Naive thymus-derived CD4-positive, alpha-beta T cell (primary cell): ENCODE measurements at regions of chr2 and their contacts with region 1.

Region 1: GRCh38 chr2:26330113-26330549 is 15.8 kb upstream of the SELENOI start:
- DNase-seq: peak; percentile 62 to 81 (median 76)
- ATAC-seq: peak; percentile 99
- H3K4me3 ChIP-seq: no peak overlapping the region
- H3K4me3 Mint-ChIP-seq: peak overlapping the region in 4 of 10 donors; percentile 6 to 41 (median 19)
- H3K27ac ChIP-seq: no peak overlapping the region
- H3K27ac Mint-ChIP-seq: peak overlapping the region in 3 of 9 donors; percentile 19 to 58 (median 25)
- H3K4me1 ChIP-seq: peaks cover 0 to 6% of the 10 kb centered on the region in 2 donors
- H3K4me1 Mint-ChIP-seq: peaks cover 3 to 19% (median 9%) of the 10 kb centered on the region in 7 donors
- H3K27me3 ChIP-seq: no peaks in the 10 kb centered on the region
- H3K27me3 Mint-ChIP-seq: peaks cover 0 to 4% (median 0%) of the 10 kb centered on the region in 5 donors

Region 2: DNA sequence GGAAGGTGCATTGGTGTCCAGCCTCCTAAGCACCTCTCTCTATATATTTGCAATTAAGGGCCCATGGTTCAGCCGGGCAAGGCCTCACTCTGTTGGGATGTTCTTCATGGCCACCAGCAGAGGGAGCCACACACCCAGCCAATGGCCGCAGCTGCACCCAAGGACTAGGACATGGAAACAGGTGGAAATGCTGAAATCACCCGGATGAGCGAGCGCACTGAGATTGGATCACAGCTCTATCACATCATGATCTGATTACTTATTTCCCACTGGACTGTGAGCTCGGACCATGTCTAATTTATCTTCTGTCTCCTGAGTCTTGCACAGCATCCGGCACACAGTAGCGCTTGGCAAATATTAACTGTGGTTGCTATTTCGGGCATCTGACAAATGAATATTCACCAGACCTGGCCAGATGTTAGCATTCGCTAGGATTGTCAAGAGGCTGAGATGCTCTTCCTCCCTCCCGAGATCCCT is 379.0 kb before region 1 on chr2:
- CTCF ChIA-PET with region 1: no interaction called
- POLR2A ChIA-PET with region 1: no interaction called
- intact Hi-C with region 1: loop called (anchors 1 kb)
- DNase-seq: peak; percentile 39 to 76 (median 57)
- ATAC-seq: peak; percentile 95
- H3K4me3 ChIP-seq: no peak overlapping the region
- H3K4me3 Mint-ChIP-seq: no peak overlapping the region
- H3K27ac ChIP-seq: no peak overlapping the region
- H3K27ac Mint-ChIP-seq: peak overlapping the region in 1 of 9 donors; percentile 18
- H3K4me1 ChIP-seq: no peaks in the 10 kb centered on the region
- H3K4me1 Mint-ChIP-seq: peaks cover 0 to 4% (median 0%) of the 10 kb centered on the region in 7 donors
- H3K27me3 ChIP-seq: no peaks in the 10 kb centered on the region
- H3K27me3 Mint-ChIP-seq: no peaks in the 10 kb centered on the region

Region 3: GRCh38 chr2:26172871-26173775 is 157.0 kb before region 1 on chr2 and contains the start of gene GAREM2:
- CTCF ChIA-PET with region 1: no interaction called
- POLR2A ChIA-PET with region 1: no interaction called
- intact Hi-C with region 1: loop called in 1 of 2 experiments (anchors 2 kb)
- DNase-seq: no peak
- ATAC-seq: peak; percentile 21
- H3K4me3 ChIP-seq: peak within 1 kb of the TSS; percentile 27
- H3K4me3 Mint-ChIP-seq: peak within 1 kb of the TSS; percentile 71 to 89 (median 80)
- H3K27ac ChIP-seq: no peak within 1 kb of the TSS
- H3K27ac Mint-ChIP-seq: no peak within 1 kb of the TSS
- H3K4me1 ChIP-seq: no peaks in the 10 kb centered on the region
- H3K4me1 Mint-ChIP-seq: peaks cover 9 to 19% (median 15%) of the 10 kb centered on the region in 7 donors
- H3K27me3 ChIP-seq: peaks cover 0 to 9% of the 10 kb centered on the region in 2 donors
- H3K27me3 Mint-ChIP-seq: peaks cover 30 to 61% (median 40%) of the 10 kb centered on the region in 5 donors
- total RNA-seq, gene GAREM2: 4.5 to 8.4 (median 4.9) TPM

Region 4: GRCh38 chr2:26235085-26235484 is 95.0 kb before region 1 on chr2:
- CTCF ChIA-PET with region 1: interaction called, 6 read pairs
- POLR2A ChIA-PET with region 1: no interaction called
- intact Hi-C with region 1: loop called in 1 of 2 experiments (anchors 1 kb)
- DNase-seq: peak in 1 of 9 donors; percentile 17
- ATAC-seq: no peak
- H3K4me3 ChIP-seq: no peak overlapping the region
- H3K4me3 Mint-ChIP-seq: no peak overlapping the region
- H3K27ac ChIP-seq: no peak overlapping the region
- H3K27ac Mint-ChIP-seq: no peak overlapping the region
- H3K4me1 ChIP-seq: no peaks in the 10 kb centered on the region
- H3K4me1 Mint-ChIP-seq: peaks cover 6 to 15% (median 11%) of the 10 kb centered on the region in 7 donors
- H3K27me3 ChIP-seq: no peaks in the 10 kb centered on the region
- H3K27me3 Mint-ChIP-seq: no peaks in the 10 kb centered on the region

Region 5: GRCh38 chr2:26299471-26300101 is 30.5 kb before region 1 on chr2:
- CTCF ChIA-PET with region 1: interaction called, 4 read pairs
- POLR2A ChIA-PET with region 1: interaction called, 4 read pairs
- intact Hi-C with region 1: loop called in 1 of 2 experiments (anchors 1 kb)
- DNase-seq: peak in 7 of 9 donors; percentile 39 to 58 (median 51)
- ATAC-seq: peak; percentile 46
- H3K4me3 ChIP-seq: peak overlapping the region; percentile 78
- H3K4me3 Mint-ChIP-seq: no peak overlapping the region
- H3K27ac ChIP-seq: peak overlapping the region; percentile 84
- H3K27ac Mint-ChIP-seq: no peak overlapping the region
- H3K4me1 ChIP-seq: peaks cover 7 to 15% of the 10 kb centered on the region in 2 donors
- H3K4me1 Mint-ChIP-seq: peaks cover 0 to 8% (median 0%) of the 10 kb centered on the region in 7 donors
- H3K27me3 ChIP-seq: no peaks in the 10 kb centered on the region
- H3K27me3 Mint-ChIP-seq: peaks cover 0 to 29% (median 0%) of the 10 kb centered on the region in 5 donors

Region 6: DNA sequence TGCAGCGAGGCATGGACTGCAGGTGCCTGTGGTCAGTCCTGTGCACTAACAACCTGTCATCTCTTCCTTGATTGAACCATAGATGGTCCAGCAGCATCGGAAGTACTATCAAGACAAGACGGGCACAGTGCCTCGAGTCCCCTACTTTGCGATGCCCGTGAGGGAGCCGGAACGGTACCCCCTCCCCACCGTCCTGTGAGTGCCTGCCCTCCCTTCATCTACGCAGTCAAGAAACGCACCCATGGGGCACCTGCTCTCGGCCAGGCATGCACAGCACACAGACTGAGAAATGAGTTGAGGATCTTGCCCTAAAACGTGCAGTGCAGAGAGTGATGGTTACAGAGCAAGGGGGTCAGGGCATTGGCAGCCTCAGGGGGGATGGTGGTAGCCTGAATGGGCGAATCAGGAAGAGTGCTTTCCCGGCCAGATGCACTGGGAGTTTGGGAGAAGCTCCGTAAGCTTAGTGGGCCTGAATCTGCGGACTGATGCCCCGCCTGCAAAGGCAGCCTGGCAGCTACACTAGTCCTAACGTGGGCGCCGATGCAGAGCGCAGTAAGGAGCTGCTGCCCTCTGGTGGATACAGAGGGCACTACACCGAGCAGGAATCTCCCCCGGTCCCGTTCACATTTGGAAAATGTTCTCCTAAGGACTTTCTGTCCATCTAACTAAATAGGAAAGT is 247.4 kb after region 1 on chr2:
- CTCF ChIA-PET with region 1: no interaction called
- POLR2A ChIA-PET with region 1: no interaction called
- intact Hi-C with region 1: loop called in 1 of 2 experiments (anchors 2 kb)
- DNase-seq: peak; percentile 17 to 66 (median 52)
- ATAC-seq: peak; percentile 88
- H3K4me3 ChIP-seq: no peak overlapping the region
- H3K4me3 Mint-ChIP-seq: no peak overlapping the region
- H3K27ac ChIP-seq: no peak overlapping the region
- H3K27ac Mint-ChIP-seq: no peak overlapping the region
- H3K4me1 ChIP-seq: no peaks in the 10 kb centered on the region
- H3K4me1 Mint-ChIP-seq: peaks cover 0 to 5% (median 0%) of the 10 kb centered on the region in 7 donors
- H3K27me3 ChIP-seq: peaks cover 0 to 5% of the 10 kb centered on the region in 2 donors
- H3K27me3 Mint-ChIP-seq: peaks cover 5 to 13% (median 10%) of the 10 kb centered on the region in 5 donors